A673 (cell line): ENCODE measurements at regions of chr2 and their contacts with region 1.

Region 1: GRCh38 chr2:6556755-6557154 is 309.0 kb downstream of the CMPK2 start:
- DNase-seq: peak; percentile 98
- H3K4me3 ChIP-seq: no peak overlapping the region
- H3K27ac ChIP-seq: peak overlapping the region; percentile 68
- H3K4me1 ChIP-seq: peaks cover 12% of the 10 kb centered on the region
- H3K27me3 ChIP-seq: no peaks in the 10 kb centered on the region
- CTCF ChIP-seq: no peak

Region 2: DNA sequence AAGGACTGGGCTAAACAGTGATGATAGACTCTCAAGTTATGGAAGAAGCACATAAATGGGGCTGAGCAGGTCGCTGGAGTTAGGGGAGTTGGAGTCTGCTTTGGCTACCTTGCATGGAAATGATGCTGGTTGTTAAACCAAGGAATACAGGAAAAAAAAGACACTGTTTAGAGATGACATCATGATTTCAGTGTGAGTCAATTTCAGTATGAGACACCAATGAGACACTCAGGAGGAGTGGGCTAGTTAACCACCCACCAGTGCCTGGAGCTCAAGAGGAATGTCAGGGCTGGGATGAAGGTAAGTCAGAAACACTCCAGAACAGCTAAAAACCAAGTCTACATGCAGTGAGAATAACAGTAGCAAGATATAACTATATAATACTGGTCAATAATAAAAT is 560.9 kb before region 1 on chr2:
- CTCF ChIA-PET with region 1: no interaction called
- POLR2A ChIA-PET with region 1: no interaction called
- intact Hi-C with region 1: no loop called
- DNase-seq: no peak
- H3K4me3 ChIP-seq: no peak overlapping the region
- H3K27ac ChIP-seq: no peak overlapping the region
- H3K4me1 ChIP-seq: no peaks in the 10 kb centered on the region
- H3K27me3 ChIP-seq: no peaks in the 10 kb centered on the region
- CTCF ChIP-seq: no peak

Region 3: DNA sequence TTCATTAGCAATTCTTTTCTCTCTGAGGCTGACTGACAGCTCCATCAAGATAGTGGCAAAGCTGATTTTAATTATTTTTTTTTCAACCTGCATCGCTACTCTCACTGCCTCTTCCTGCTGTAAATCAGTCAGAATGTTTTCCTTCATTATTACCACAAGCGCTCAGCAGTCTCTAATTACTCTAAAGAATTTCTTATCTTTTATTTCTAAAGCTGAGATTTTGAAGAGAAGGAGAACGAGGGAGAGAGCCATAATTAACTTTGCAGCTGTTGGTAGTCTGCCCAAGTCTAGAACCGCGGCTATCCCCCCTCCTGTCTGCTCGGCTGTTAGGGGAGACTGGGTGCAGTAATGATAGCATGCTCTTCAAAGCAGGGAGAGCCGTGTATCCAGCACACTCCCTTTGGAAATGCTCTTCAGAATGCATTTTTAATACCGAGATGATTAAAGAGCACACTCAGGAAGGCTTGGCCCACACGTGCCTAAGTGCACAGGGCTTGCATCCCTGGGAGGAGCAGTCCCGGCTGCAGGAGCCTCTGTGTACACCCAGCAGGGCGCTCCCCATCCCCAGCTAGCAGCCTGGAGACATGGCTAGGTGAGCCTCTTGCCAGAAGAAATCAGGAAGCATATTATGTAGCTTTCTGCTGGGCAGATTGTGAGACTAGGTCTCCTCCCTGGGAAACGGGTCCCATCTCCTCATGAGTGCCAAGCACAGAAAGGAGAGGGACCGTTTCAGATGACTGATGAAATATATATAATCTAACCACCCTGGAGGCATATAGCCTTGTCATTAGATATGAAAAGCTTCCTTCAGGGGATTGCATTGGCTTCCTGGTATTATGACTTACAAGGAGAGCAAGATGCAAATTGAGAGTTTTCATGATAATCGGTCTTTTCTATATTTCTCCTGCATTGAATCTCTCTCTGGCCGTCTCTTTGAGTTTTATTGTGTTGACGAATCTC is 246.2 kb before region 1 on chr2:
- CTCF ChIA-PET with region 1: no interaction called
- POLR2A ChIA-PET with region 1: no interaction called
- intact Hi-C with region 1: loop called (anchors 5 kb)
- DNase-seq: peak; percentile 91
- H3K4me3 ChIP-seq: peak overlapping the region; percentile 28
- H3K27ac ChIP-seq: peak overlapping the region; percentile 64
- H3K4me1 ChIP-seq: peaks cover 53% of the 10 kb centered on the region
- H3K27me3 ChIP-seq: no peaks in the 10 kb centered on the region
- CTCF ChIP-seq: no peak